Activated CD4-positive, alpha-beta memory T cell treated with anti-CD3 and anti-CD28 coated beads for 36 hours (primary cell): ENCODE measurements at regions of chr11 and their contacts with region 1.

Region 1: GRCh38 chr11:128757235-128757711 is 63.4 kb downstream of the FLI1 start:
- DNase-seq: peak; percentile 84
- H3K4me3 Mint-ChIP-seq: peak overlapping the region; percentile 42
- H3K27ac Mint-ChIP-seq: peak overlapping the region; percentile 89
- H3K4me1 Mint-ChIP-seq: peaks cover 81% of the 10 kb centered on the region
- H3K27me3 Mint-ChIP-seq: no peaks in the 10 kb centered on the region

Region 2: DNA sequence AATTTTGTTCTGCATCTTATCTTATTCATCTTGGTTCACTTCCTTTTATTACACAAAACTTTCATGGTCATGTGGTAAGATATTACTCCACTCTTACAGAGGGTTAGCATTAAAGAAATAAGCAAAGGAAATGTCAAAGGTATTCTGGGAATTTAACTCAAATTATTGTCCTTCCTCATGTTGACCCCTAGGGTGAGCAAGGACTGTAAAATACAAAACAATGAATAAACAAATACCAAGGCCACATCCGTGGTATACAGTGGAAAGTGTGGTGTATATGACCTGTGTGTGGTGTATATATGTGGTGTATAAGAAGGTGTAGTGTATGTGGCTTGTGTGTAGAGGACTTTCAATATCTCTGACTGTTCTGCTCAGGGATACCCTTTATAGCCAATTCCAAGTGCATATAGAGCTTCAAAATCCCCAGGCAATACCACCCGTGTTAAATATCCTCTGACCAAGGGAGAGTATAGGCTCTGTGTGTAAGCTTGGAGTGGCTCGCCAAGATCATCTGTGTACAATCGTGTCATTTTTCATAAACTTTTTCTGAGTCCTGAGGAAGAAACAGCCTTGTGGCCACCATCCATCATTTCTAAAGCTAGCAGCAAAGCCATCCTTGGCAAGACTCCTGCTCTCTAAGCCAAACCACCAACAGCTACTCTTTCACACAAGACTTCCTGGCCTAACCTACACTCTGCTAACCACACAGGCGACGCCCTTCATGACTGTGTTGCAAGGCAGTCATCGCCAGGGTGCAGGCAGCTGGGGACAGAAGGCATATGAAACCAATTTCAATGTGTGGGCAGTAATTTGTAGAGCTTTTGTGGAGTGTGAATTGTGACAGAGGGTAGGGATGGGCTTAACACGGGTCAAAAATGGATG is 717.9 kb before region 1 on chr11:
- CTCF ChIA-PET with region 1: no interaction called
- POLR2A ChIA-PET with region 1: no interaction called
- intact Hi-C with region 1: loop called (anchors 5 kb)
- DNase-seq: peak; percentile 90
- H3K4me3 Mint-ChIP-seq: peak overlapping the region; percentile 61
- H3K27ac Mint-ChIP-seq: peak overlapping the region; percentile 89
- H3K4me1 Mint-ChIP-seq: peaks cover 52% of the 10 kb centered on the region
- H3K27me3 Mint-ChIP-seq: no peaks in the 10 kb centered on the region

Region 3: GRCh38 chr11:128579798-128580504 is 177.3 kb before region 1 on chr11:
- CTCF ChIA-PET with region 1: interaction called, 4 read pairs
- POLR2A ChIA-PET with region 1: no interaction called
- intact Hi-C with region 1: loop called (anchors 1 kb)
- DNase-seq: peak; percentile 27
- H3K4me3 Mint-ChIP-seq: peak overlapping the region; percentile 71
- H3K27ac Mint-ChIP-seq: peak overlapping the region; percentile 95
- H3K4me1 Mint-ChIP-seq: peaks cover 68% of the 10 kb centered on the region
- H3K27me3 Mint-ChIP-seq: no peaks in the 10 kb centered on the region

Region 4: GRCh38 chr11:128695539-128696221 is 61.6 kb before region 1 on chr11:
- CTCF ChIA-PET with region 1: interaction called, 7 read pairs
- POLR2A ChIA-PET with region 1: interaction called, 4 read pairs
- intact Hi-C with region 1: loop called (anchors 1 kb)
- DNase-seq: peak; percentile 55
- H3K4me3 Mint-ChIP-seq: peak overlapping the region; percentile 78
- H3K27ac Mint-ChIP-seq: peak overlapping the region; percentile 89
- H3K4me1 Mint-ChIP-seq: peaks cover 57% of the 10 kb centered on the region
- H3K27me3 Mint-ChIP-seq: peaks cover 5% of the 10 kb centered on the region

Region 5: DNA sequence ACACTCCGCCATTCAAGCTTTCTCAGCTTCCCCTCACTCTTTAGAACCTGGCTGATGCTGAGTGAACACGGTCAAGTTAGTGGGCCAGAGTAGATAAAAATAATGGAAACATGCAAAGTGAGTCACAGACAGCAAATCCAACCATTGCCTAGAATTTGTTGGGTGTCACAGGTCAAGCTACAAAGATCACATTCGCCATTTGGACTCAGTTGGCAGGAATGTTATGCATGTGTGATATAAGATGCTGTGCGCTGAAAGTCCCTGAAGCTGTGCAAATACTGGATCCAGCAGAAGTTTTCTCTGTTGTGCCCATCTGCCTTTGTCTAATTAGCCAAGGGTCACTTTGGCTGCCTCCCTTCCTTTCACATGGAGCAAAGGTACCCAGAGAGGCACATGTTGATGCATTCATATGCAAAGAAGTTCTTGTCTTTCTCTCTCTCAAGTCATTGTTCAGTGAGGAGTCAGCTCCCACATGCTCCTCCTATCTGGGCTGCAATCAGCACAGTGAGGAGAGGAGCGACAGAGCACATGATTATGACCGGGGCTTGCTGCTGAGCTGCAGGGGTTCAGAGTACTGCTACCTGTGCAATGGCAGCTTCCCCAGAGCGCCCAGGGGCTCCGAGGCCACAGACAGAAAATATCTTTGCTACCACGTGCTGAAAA is 23.7 kb before region 1 on chr11:
- CTCF ChIA-PET with region 1: interaction called, 14 read pairs
- POLR2A ChIA-PET with region 1: interaction called, 7 read pairs
- intact Hi-C with region 1: loop called (anchors 1 kb)
- DNase-seq: peak; percentile 65
- H3K4me3 Mint-ChIP-seq: peak overlapping the region; percentile 63
- H3K27ac Mint-ChIP-seq: peak overlapping the region; percentile 79
- H3K4me1 Mint-ChIP-seq: peaks cover 98% of the 10 kb centered on the region
- H3K27me3 Mint-ChIP-seq: no peaks in the 10 kb centered on the region

Region 6: GRCh38 chr11:128776424-128777284 is 19.4 kb after region 1 on chr11:
- CTCF ChIA-PET with region 1: interaction called, 26 read pairs
- POLR2A ChIA-PET with region 1: no interaction called
- intact Hi-C with region 1: no loop called
- DNase-seq: peak; percentile 48
- H3K4me3 Mint-ChIP-seq: no peak overlapping the region
- H3K27ac Mint-ChIP-seq: peak overlapping the region; percentile 53
- H3K4me1 Mint-ChIP-seq: peaks cover 41% of the 10 kb centered on the region
- H3K27me3 Mint-ChIP-seq: no peaks in the 10 kb centered on the region

Region 7: DNA sequence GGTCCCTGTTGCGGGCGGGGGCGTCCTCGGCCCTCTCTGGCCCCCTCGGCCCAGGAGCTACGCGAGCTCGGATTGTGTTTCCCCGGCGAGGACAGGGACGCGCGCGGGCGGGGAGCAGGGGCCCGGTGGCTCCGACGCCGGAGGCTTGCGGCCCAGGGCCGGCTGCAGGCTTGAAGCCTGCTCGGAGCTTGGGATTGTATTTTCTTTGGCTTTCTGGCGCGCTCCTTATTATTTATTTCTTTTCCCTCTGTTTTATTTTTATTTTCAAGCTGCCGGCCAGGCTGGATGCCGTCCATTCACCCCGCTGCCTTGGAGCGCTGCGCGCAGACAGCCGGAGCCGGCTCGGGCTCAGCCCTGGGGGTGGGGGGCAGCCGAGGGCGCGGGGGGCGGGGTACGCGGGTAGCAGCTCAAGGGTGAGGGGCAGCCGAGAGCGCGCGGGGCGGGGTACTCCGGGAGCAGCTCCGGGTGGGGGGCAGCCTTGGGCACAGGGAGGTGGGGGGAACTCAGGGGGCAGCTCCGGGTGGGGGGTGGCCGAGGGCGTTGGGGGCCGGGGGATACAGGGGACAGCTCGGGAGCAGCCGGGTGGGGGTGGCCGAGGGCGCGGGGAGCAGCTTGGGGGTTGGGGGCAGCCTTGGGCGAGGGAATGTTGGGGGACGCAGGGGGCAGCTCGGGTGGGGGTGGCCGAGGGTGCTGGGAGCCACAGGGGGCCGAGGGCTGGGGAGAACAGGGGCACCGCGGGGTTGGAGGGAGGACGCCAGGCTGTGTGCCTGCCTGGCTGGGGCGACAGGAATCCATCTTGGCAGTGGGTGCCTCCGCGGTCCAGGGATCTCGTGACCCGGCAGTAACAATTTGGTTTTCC is 67.1 kb after region 1 on chr11:
- CTCF ChIA-PET with region 1: no interaction called
- POLR2A ChIA-PET with region 1: no interaction called
- intact Hi-C with region 1: no loop called
- DNase-seq: no peak
- H3K4me3 Mint-ChIP-seq: no peak overlapping the region
- H3K27ac Mint-ChIP-seq: no peak overlapping the region
- H3K4me1 Mint-ChIP-seq: no peaks in the 10 kb centered on the region
- H3K27me3 Mint-ChIP-seq: no peaks in the 10 kb centered on the region